A673 (cell line): ENCODE measurements at regions of chr6 and their contacts with region 1.

Region 1: DNA sequence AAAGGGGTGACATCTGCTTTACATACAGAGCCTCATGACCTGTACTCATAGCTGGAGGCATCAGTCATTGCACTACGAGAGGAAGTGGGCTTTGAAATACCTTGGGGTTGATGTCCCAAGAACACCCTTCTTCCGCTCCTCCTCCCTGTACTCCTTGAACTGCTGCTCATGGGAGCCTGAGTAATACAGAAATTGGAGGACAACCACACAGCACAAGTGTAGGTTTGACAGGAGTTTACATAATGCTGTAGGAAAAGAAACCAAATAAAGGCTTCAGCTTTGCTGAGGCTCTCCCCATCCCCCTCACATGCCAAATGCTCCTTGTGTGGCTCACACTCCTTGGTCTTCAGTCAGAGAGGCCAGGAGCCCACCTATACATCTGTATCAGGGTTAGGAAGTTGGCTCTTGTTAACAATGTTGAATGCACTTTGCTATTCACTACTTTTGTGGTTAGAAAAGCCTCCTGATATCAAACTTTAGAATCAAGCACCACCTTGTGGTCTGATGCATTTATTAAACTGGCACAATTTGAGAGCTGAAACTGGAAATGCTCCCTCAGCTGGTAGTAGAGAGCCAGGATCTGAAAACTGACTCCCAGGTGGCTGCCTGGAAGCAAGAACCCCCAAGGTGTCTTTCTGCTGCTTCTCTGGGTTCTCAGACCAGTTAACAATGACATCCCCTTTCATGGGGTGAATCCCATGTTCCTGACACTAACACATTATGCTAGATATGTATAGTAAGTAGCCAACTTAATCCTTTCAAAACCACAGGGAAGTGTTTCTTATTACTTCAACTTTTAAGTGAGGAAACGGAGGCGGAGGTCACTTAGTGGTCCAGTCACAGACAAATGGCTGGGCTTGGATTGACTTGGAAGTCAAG is 56.2 kb upstream of the EDN1 start:
- DNase-seq: peak; percentile 75
- H3K4me3 ChIP-seq: no peak overlapping the region
- H3K27ac ChIP-seq: no peak overlapping the region
- H3K4me1 ChIP-seq: no peaks in the 10 kb centered on the region
- H3K27me3 ChIP-seq: no peaks in the 10 kb centered on the region
- CTCF ChIP-seq: peak; percentile 83

Region 2: GRCh38 chr6:11700118-11700718 is 533.7 kb before region 1 on chr6:
- CTCF ChIA-PET with region 1: no interaction called
- POLR2A ChIA-PET with region 1: no interaction called
- intact Hi-C with region 1: loop called (anchors 5 kb)
- DNase-seq: peak; percentile 65
- H3K4me3 ChIP-seq: no peak overlapping the region
- H3K27ac ChIP-seq: no peak overlapping the region
- H3K4me1 ChIP-seq: no peaks in the 10 kb centered on the region
- H3K27me3 ChIP-seq: peaks cover 3% of the 10 kb centered on the region
- CTCF ChIP-seq: peak; percentile 57